BJ (cell line): ENCODE measurements at regions of chr21 and their contacts with region 1.

Region 1: GRCh38 chr21:37463083-37463801 is 96.7 kb downstream of the DYRK1A start:
- DNase-seq: no peak
- H3K4me3 ChIP-seq: peak overlapping the region; percentile 2; the same call in 1 of the 2 replicates
- H3K27me3 ChIP-seq: no peaks in the 10 kb centered on the region
- CTCF ChIP-seq: peak; percentile 66

Region 2: DNA sequence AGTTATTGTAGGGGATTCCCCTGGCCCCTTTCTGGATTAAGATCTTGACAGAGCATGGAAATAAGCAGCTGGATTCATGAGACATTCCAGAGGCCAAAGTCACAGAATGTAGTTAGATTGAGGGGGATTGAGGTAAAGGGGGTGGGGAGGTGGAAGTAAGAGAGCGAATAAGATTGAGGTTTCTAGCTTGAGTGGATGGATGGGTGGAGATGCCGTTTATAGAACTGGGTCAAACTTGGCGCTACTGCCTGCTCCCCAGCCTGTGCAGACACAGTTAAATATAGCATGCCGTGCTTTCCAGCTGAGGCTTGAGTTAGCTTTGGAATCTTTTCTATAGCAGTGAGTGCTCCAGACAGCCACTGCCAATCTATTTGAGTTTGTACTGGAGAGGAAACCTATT is 11.0 kb before region 1 on chr21:
- CTCF ChIA-PET with region 1: interaction called, 12 read pairs
- POLR2A ChIA-PET with region 1: no interaction called
- DNase-seq: peak; percentile 50
- H3K4me3 ChIP-seq: no peak overlapping the region
- H3K27me3 ChIP-seq: no peaks in the 10 kb centered on the region
- CTCF ChIP-seq: no peak

Region 3: DNA sequence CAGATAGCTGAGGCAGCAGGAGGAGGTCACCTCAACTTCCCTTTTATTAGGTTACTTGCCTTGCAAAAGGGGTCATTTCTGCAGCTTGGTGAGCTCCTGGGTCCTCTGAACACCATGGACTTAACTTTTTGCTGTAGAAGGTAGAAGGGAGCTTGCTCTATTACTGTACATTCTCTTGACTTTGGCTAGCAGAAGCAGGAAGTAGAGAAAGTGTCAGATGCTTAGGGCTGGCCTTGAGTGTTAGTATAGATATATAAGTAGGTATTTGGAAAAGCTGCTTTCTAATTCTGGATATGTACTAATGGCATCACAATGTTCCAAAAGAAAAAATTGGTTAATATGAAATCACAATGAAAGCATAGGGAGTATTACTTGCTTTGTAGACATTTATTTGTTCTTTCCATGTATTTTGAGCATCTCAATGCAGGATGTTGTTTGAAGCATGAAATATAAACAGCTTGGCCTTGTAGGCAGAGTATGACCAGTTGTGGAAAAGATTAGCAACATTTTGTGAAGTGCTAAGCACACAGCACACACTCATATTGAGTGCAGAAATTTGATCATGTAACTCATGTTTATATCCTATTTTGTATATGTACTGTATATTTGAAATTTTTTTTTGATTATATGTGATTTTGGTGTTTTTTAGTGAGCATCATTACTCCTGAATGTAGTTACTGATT is 12.1 kb after region 1 on chr21:
- CTCF ChIA-PET with region 1: interaction called, 15 read pairs
- POLR2A ChIA-PET with region 1: no interaction called
- DNase-seq: no peak
- H3K4me3 ChIP-seq: no peak overlapping the region
- H3K27me3 ChIP-seq: no peaks in the 10 kb centered on the region
- CTCF ChIP-seq: no peak